ENCODE measurements at regions of chr19 and their contacts with region 1.

Region 1: GRCh38 chr19:16382775-16383543 is 58.3 kb downstream of the KLF2 start:
- DNase-seq: peak; percentile 89
- H3K4me3 Mint-ChIP-seq: peak overlapping the region; percentile 62
- H3K27ac Mint-ChIP-seq: peak overlapping the region; percentile 95
- H3K4me1 Mint-ChIP-seq: peaks cover 68% of the 10 kb centered on the region
- H3K27me3 Mint-ChIP-seq: no peaks in the 10 kb centered on the region

Region 2: GRCh38 chr19:16247353-16248182 is 135.4 kb before region 1 on chr19:
- CTCF ChIA-PET with region 1: interaction called, 110 read pairs
- DNase-seq: peak; percentile 90
- H3K4me3 Mint-ChIP-seq: no peak overlapping the region
- H3K27ac Mint-ChIP-seq: peak overlapping the region; percentile 67
- H3K4me1 Mint-ChIP-seq: peaks cover 30% of the 10 kb centered on the region
- H3K27me3 Mint-ChIP-seq: peaks cover 12% of the 10 kb centered on the region

Region 3: GRCh38 chr19:16252459-16253205 is 130.3 kb before region 1 on chr19:
- CTCF ChIA-PET with region 1: interaction called, 110 read pairs
- DNase-seq: no peak
- H3K4me3 Mint-ChIP-seq: no peak overlapping the region
- H3K27ac Mint-ChIP-seq: no peak overlapping the region
- H3K4me1 Mint-ChIP-seq: peaks cover 30% of the 10 kb centered on the region
- H3K27me3 Mint-ChIP-seq: peaks cover 9% of the 10 kb centered on the region

Region 4: GRCh38 chr19:16309643-16310042 is 73.3 kb before region 1 on chr19:
- CTCF ChIA-PET with region 1: no interaction called
- DNase-seq: no peak
- H3K4me3 Mint-ChIP-seq: no peak overlapping the region
- H3K27ac Mint-ChIP-seq: no peak overlapping the region
- H3K4me1 Mint-ChIP-seq: no peaks in the 10 kb centered on the region
- H3K27me3 Mint-ChIP-seq: peaks cover 45% of the 10 kb centered on the region

Region 5: GRCh38 chr19:16330368-16330801 is 52.6 kb before region 1 on chr19:
- CTCF ChIA-PET with region 1: interaction called, 39 read pairs
- DNase-seq: peak; percentile 97
- H3K4me3 Mint-ChIP-seq: peak overlapping the region; percentile 100
- H3K27ac Mint-ChIP-seq: peak overlapping the region; percentile 100
- H3K4me1 Mint-ChIP-seq: peaks cover 51% of the 10 kb centered on the region
- H3K27me3 Mint-ChIP-seq: peaks cover 38% of the 10 kb centered on the region

Region 6: GRCh38 chr19:16371540-16371986 is 11.4 kb before region 1 on chr19:
- CTCF ChIA-PET with region 1: interaction called, 37 read pairs
- DNase-seq: peak; percentile 95
- H3K4me3 Mint-ChIP-seq: no peak overlapping the region
- H3K27ac Mint-ChIP-seq: no peak overlapping the region
- H3K4me1 Mint-ChIP-seq: peaks cover 7% of the 10 kb centered on the region
- H3K27me3 Mint-ChIP-seq: no peaks in the 10 kb centered on the region

Region 7: GRCh38 chr19:16403151-16403977 is 20.4 kb after region 1 on chr19:
- CTCF ChIA-PET with region 1: interaction called, 12 read pairs
- DNase-seq: no peak
- H3K4me3 Mint-ChIP-seq: no peak overlapping the region
- H3K27ac Mint-ChIP-seq: no peak overlapping the region
- H3K4me1 Mint-ChIP-seq: peaks cover 15% of the 10 kb centered on the region
- H3K27me3 Mint-ChIP-seq: no peaks in the 10 kb centered on the region

Region 8: GRCh38 chr19:16506961-16507360 is 124.0 kb after region 1 on chr19:
- CTCF ChIA-PET with region 1: no interaction called
- DNase-seq: no peak
- H3K4me3 Mint-ChIP-seq: no peak overlapping the region
- H3K27ac Mint-ChIP-seq: no peak overlapping the region
- H3K4me1 Mint-ChIP-seq: no peaks in the 10 kb centered on the region
- H3K27me3 Mint-ChIP-seq: no peaks in the 10 kb centered on the region